Gastrocnemius medialis (tissue), 4 donors: ENCODE measurements at regions of chr1 and their contacts with region 1.

Region 1: DNA sequence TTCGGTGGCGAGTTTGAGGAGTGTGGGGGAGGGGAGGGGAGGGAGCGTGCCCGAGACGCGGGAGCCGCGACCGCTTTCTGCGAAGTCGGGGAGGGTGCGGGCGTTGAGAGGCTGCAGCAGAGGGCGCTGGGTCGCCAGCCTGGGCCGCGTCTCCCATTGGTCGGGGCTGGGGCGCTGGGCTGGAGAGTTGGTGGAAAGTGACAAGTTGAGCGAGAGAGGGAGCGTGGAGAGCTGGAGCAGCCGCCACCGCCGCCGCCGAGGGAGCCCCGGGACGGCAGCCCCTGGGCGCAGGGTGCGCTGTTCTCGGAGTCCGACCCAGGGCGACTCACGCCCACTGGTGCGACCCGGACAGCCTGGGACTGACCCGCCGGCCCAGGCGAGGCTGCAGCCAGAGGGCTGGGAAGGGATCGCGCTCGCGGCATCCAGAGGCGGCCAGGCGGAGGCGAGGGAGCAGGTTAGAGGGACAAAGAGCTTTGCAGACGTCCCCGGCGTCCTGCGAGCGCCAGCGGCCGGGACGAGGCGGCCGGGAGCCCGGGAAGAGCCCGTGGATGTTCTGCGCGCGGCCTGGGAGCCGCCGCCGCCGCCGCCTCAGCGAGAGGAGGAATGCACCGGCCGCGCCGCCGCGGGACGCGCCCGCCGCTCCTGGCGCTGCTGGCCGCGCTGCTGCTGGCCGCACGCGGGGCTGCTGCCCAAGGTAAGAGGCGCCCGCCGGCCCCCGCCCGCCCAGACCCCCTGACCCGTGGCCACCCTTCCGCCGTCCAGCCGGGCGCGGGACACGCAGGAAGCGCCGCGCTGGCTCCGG is at the start of gene ROR1:
- DNase-seq: peak; percentile 83 to 86
- ATAC-seq: peak; percentile 93 to 95
- H3K4me3 ChIP-seq: peak within 1 kb of the TSS; percentile 68 to 89 (median 74)
- H3K27ac ChIP-seq: peak within 1 kb of the TSS; percentile 78 to 86 (median 85)
- H3K4me1 ChIP-seq: peaks cover 7 to 23% of the 10 kb centered on the region in 2 donors
- H3K27me3 ChIP-seq: no peaks in the 10 kb centered on the region
- CTCF ChIP-seq: peak; percentile 39 to 82 (median 67)
- POLR2A ChIP-seq: peak; percentile 37 to 57
- total RNA-seq, gene ROR1: 2.5 to 4.3 (median 3.6) TPM

Region 2: DNA sequence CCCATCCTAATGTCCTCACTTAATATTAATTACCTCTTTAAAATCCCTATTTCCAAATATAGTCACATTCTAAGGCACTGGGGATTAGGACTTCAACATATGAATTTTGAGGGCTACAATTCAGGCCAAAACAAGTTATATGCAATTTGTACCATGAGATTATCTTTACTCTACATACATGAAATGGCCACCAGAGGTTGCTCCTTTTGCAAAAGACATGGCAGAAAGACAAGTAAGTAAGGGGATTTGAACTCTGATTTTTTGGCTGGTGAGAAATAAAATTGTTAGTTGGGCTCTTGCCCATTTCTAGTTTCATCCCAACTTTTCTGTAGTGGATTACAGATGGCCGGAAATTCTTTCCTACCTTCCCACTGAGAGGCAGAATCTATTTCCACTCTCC is 411.4 kb before region 1 on chr1:
- in situ Hi-C with region 1: no loop called
- intact Hi-C with region 1: no loop called
- DNase-seq: no peak
- ATAC-seq: no peak
- H3K4me3 ChIP-seq: no peak overlapping the region
- H3K27ac ChIP-seq: no peak overlapping the region
- H3K4me1 ChIP-seq: peaks cover 0 to 3% of the 10 kb centered on the region in 2 donors
- H3K27me3 ChIP-seq: no peaks in the 10 kb centered on the region
- CTCF ChIP-seq: no peak
- POLR2A ChIP-seq: no peak

Region 3: DNA sequence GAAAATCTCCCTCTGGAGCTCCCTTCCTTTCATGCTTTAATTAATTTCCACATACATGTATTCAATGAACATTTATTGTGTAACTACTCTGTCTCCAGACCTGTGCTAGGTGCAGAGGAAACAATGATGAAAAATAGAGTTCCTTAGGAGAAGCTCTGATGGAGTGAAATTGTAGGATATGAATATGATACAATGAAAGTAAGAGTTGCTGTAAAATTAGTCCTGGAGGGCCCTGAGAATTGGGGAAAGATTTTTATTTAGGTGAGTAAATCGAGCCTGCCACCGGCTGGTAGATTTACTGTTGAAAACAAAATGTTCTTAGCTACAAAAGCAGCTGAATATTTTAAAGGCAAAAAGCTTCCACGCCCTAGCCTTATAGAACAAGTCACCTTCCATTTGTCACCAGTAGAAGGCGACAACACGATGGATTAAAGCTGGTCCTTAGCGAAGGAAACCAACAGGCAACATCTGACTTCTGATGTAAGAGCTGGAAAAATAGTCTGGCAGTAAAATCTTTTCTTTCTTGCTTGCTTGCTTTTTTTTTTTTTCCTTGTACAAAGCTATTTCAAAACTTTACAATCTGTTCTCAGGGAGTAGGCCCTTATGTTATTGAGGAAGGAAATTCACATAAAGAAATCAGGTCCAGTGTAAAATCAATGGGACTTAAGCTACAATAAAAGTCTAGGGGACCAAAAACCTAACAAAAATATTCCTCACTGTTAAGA is 82.2 kb before region 1 on chr1:
- in situ Hi-C with region 1: no loop called
- intact Hi-C with region 1: loop called (anchors 5 kb)
- DNase-seq: peak; percentile 49 to 50
- ATAC-seq: peak; percentile 95 to 96
- H3K4me3 ChIP-seq: no peak overlapping the region
- H3K27ac ChIP-seq: no peak overlapping the region
- H3K4me1 ChIP-seq: peaks cover 5 to 7% of the 10 kb centered on the region in 2 donors
- H3K27me3 ChIP-seq: no peaks in the 10 kb centered on the region
- CTCF ChIP-seq: peak; percentile 59 to 78 (median 65)
- POLR2A ChIP-seq: no peak

Region 4: DNA sequence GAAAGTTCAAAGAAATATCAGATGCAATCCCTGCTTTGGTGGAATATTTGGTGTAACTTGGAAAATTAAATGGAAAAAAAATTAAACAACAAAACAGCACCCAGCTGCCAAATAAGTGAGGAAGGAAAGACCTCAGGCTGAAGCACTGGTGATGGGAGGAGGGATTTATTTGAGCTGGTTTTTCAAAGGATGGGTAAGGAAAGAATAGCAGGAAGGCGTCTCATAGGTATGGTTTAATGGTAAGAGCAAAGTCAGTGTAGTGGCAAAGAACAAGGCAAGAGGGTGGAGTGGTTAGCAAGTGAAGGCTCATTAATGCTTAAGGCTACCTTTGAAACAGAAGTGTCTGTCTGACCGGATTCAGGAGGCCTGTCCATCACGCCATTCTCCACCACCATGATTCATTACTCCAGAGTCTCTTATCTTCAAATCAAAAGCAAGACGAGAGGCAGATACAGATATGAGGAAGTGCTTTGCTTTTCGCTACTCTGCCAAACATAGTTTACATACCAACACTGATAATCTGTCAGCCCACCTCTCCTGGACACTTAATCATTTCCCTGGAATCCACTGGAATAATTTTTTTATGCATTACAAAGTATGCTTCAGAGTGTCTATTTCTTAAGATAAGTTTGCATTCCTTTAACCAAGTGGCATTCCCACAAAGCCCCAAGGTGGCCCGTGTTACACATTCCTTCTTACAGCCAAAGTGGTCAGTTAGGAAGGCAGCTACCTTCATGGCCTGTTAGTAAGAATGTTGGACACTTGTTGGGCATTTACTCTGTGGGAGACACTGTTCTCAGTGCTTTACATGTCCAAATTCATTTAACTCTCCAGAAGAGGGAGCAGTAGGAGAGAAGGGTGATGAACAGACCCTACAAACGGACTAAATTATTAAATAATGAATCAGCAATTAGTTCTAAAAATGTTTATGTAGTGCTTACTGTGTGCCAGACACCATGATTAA is 146.4 kb after region 1 on chr1:
- in situ Hi-C with region 1: no loop called
- intact Hi-C with region 1: loop called (anchors 2 kb)
- DNase-seq: no peak
- ATAC-seq: no peak
- H3K4me3 ChIP-seq: no peak overlapping the region
- H3K27ac ChIP-seq: no peak overlapping the region
- H3K4me1 ChIP-seq: peaks cover 17% of the 10 kb centered on the region in 2 donors
- H3K27me3 ChIP-seq: no peaks in the 10 kb centered on the region
- CTCF ChIP-seq: peak in 1 of 5 experiments; percentile 6
- POLR2A ChIP-seq: no peak

Region 5: GRCh38 chr1:64051796-64052195 is 277.8 kb after region 1 on chr1:
- in situ Hi-C with region 1: no loop called
- intact Hi-C with region 1: loop called (anchors 10 kb)
- DNase-seq: no peak
- ATAC-seq: peak; percentile 42 to 54
- H3K4me3 ChIP-seq: no peak overlapping the region
- H3K27ac ChIP-seq: peak overlapping the region in 3 of 4 donors; percentile 11 to 29 (median 25)
- H3K4me1 ChIP-seq: peaks cover 23 to 24% of the 10 kb centered on the region in 2 donors
- H3K27me3 ChIP-seq: no peaks in the 10 kb centered on the region
- CTCF ChIP-seq: no peak
- POLR2A ChIP-seq: no peak

Region 6: DNA sequence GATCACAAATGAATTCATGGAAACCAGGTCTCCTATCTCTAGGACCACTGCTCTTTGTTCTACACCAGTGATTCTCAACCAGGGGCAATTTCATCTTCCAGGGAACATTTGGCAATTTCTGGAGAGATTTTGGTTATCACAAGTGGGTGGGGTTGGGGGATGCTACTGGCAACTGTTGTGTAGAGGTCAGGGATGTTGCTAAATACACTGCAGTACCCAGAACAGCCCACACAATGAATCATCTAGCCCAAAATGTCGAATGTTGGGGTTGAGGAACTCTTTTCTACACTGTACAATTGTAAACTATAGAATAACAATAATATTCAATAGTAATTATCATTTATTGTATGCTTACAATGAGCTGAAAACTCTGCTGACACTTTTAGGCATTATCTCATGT is 373.7 kb after region 1 on chr1:
- in situ Hi-C with region 1: loop called in 2 of 4 experiments (anchors 10 to 25 kb)
- intact Hi-C with region 1: no loop called
- DNase-seq: no peak
- ATAC-seq: no peak
- H3K4me3 ChIP-seq: no peak overlapping the region
- H3K27ac ChIP-seq: no peak overlapping the region
- H3K4me1 ChIP-seq: no peaks in the 10 kb centered on the region
- H3K27me3 ChIP-seq: no peaks in the 10 kb centered on the region
- CTCF ChIP-seq: no peak
- POLR2A ChIP-seq: no peak